PC-3 (cell line): ENCODE measurements at regions of chr10 and their contacts with region 1.

Region 1: GRCh38 chr10:37495415-37495814 is 362.0 kb downstream of the ZNF248 start:
- DNase-seq: peak; percentile 94
- ATAC-seq: peak; percentile 94
- H3K4me3 ChIP-seq: no peak overlapping the region
- H3K27ac ChIP-seq: no peak overlapping the region
- H3K4me1 ChIP-seq: peaks cover 2% of the 10 kb centered on the region
- H3K27me3 ChIP-seq: no peaks in the 10 kb centered on the region
- CTCF ChIP-seq: peak; percentile 98

Region 2: GRCh38 chr10:36899651-36900050 is 595.8 kb before region 1 on chr10:
- CTCF ChIA-PET with region 1: no interaction called
- POLR2A ChIA-PET with region 1: no interaction called
- intact Hi-C with region 1: loop called (anchors 1 kb)
- DNase-seq: peak; percentile 66
- ATAC-seq: peak; percentile 88
- H3K4me3 ChIP-seq: no peak overlapping the region
- H3K27ac ChIP-seq: no peak overlapping the region
- H3K4me1 ChIP-seq: peaks cover 3% of the 10 kb centered on the region; the same call in 1 of the 2 replicates
- H3K27me3 ChIP-seq: 0 out of 2 replicates have a peak, but pooled peaks cover 2% of the 10 kb centered on the region
- CTCF ChIP-seq: no peak

Region 3: DNA sequence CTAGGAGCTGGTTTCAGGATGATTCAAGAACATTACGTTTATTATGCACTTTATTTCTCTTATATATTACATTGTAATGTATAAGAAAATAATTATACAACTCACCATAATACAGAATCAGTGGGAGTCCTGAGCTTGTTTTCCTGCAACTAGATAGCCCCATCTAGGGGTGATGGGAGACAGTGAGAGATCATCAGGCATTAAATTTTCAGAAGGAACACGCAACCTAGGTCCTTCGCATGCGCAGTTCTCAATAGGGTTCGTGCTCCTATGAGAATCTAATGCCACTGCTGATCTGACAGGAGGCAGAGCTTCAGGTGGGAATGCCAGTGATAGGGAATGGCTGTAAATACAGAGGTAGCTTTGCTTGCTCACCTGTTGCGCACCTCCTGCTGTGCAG is 232.1 kb before region 1 on chr10:
- CTCF ChIA-PET with region 1: interaction called, 10 read pairs
- POLR2A ChIA-PET with region 1: no interaction called
- intact Hi-C with region 1: no loop called
- DNase-seq: peak; percentile 83
- ATAC-seq: peak; percentile 75
- H3K4me3 ChIP-seq: no peak overlapping the region
- H3K27ac ChIP-seq: no peak overlapping the region
- H3K4me1 ChIP-seq: no peaks in the 10 kb centered on the region; the same call in 1 of the 2 replicates
- H3K27me3 ChIP-seq: peaks cover 5% of the 10 kb centered on the region; the same call in 1 of the 2 replicates
- CTCF ChIP-seq: peak; percentile 95

Region 4: DNA sequence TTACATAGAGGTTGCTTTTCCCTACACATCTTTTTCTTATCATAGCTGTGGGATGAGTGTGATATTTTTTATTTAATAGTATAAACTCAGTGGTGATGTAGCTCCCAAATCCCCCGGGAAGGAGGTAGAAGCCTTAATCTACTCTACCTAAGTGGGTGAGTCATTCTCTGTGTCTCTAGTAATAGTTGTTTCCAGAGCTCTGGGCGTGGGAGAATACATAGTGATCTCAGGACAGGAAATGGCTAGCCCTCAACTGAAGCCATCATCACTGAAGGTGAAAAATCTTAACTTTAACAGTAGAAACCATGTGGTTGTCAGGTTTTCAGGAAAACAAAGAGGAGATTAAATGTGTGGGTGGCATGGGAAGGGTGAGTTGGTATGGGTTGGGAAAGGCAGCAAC is 91.6 kb before region 1 on chr10:
- CTCF ChIA-PET with region 1: no interaction called
- POLR2A ChIA-PET with region 1: no interaction called
- intact Hi-C with region 1: no loop called
- DNase-seq: peak; percentile 68
- ATAC-seq: peak; percentile 92
- H3K4me3 ChIP-seq: no peak overlapping the region
- H3K27ac ChIP-seq: no peak overlapping the region
- H3K4me1 ChIP-seq: no peaks in the 10 kb centered on the region
- H3K27me3 ChIP-seq: no peaks in the 10 kb centered on the region
- CTCF ChIP-seq: no peak

Region 5: DNA sequence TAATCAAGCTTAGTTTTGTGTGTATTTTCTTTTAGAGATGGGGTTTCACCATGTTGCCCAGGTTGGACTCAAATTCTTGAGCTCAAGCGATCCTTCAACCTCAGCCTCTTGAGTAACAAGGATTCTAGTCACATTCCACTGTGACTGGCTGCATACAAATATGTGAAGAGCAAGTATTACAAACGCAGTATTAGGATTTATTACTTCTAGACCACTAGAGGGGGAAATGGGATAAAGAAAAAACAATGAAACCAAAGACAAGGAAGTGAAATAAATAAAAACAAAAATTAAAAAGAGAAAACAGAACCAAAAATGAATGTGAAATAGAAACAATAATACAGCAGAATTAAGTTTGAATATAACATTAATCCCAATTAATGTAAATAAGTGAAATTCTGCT is 61.3 kb before region 1 on chr10:
- CTCF ChIA-PET with region 1: interaction called, 37 read pairs
- POLR2A ChIA-PET with region 1: no interaction called
- intact Hi-C with region 1: loop called (anchors 1 kb)
- DNase-seq: peak; percentile 87
- ATAC-seq: peak; percentile 90
- H3K4me3 ChIP-seq: no peak overlapping the region
- H3K27ac ChIP-seq: no peak overlapping the region
- H3K4me1 ChIP-seq: no peaks in the 10 kb centered on the region
- H3K27me3 ChIP-seq: no peaks in the 10 kb centered on the region
- CTCF ChIP-seq: peak; percentile 98

Region 6: GRCh38 chr10:37789590-37789989 is 294.2 kb after region 1 on chr10:
- CTCF ChIA-PET with region 1: interaction called, 10 read pairs
- POLR2A ChIA-PET with region 1: no interaction called
- intact Hi-C with region 1: no loop called
- DNase-seq: peak; percentile 100
- ATAC-seq: peak; percentile 95
- H3K4me3 ChIP-seq: peak overlapping the region; percentile 37; the same call in 1 of the 2 replicates
- H3K27ac ChIP-seq: peak overlapping the region; percentile 80
- H3K4me1 ChIP-seq: peaks cover 27% of the 10 kb centered on the region
- H3K27me3 ChIP-seq: no peaks in the 10 kb centered on the region
- CTCF ChIP-seq: no peak